Esophagus squamous epithelium (tissue), 5 donors: ENCODE measurements at regions of chr2 and their contacts with region 1.

Region 1: GRCh38 chr2:203650860-203651613 is 55.4 kb upstream of the CD28 start:
- DNase-seq: no peak
- H3K4me3 ChIP-seq: no peak overlapping the region
- H3K27ac ChIP-seq: peak overlapping the region in 2 of 4 donors; percentile 71 to 73
- H3K4me1 ChIP-seq: peaks cover 15 to 47% (median 27%) of the 10 kb centered on the region in 3 donors
- H3K27me3 ChIP-seq: no peaks in the 10 kb centered on the region
- CTCF ChIP-seq: peak; percentile 5 to 71 (median 54)
- POLR2A ChIP-seq: no peak

Region 2: GRCh38 chr2:203535078-203535783 is 115.8 kb before region 1 on chr2 and contains the start of gene RAPH1:
- intact Hi-C with region 1: loop called (anchors 10 kb)
- DNase-seq: no peak
- H3K4me3 ChIP-seq: peak within 1 kb of the TSS; percentile 79 to 98 (median 94)
- H3K27ac ChIP-seq: peak within 1 kb of the TSS; percentile 90 to 100 (median 95)
- H3K4me1 ChIP-seq: peaks cover 4 to 44% (median 11%) of the 10 kb centered on the region in 3 donors
- H3K27me3 ChIP-seq: no peaks in the 10 kb centered on the region
- CTCF ChIP-seq: peak in 1 of 6 experiments; percentile 10
- POLR2A ChIP-seq: peak in 3 of 4 donors; percentile 41 to 74 (median 71)
- total RNA-seq, gene RAPH1: 10.6 to 105 (median 26.0) TPM

Region 3: DNA sequence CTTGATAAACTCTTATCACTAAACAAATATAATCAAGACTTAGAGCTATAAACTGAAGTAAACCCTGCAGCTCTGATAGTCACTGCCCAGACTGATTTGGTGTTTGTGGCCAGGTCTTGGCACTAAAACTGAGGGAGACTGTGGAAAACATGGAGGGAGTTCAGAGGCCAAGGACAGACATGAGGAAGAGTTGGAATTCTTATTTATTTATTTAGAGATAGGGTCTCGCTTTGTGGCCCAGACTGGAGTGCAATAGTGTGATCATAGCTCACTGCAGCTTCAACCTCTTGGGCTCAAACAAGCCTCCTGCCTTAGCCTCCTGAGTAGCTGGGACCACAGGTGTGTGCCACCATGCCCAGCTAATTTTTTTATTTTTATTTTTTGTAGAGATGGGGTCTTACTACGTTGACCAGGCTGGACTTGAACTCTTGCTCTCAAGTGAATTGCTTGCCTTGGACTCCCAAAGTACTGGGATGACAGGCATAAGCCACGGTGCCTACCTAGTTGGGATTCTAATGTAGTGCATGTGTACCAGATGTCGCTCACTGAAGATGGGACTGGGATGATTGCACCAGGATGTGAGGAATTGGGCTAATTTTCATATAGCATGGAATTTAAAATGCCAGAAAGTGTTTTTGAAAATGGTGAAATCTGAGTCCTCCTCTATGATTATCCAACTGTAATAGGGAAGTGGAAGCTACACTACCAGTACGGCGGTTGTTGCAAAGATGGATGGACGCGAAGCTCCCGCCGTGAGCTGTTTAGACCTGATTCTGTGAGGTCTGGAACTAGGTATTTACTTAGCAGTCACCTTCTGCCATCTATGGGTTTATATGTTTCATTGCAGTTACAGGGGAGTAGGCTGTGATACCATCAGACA is 163.9 kb after region 1 on chr2:
- intact Hi-C with region 1: loop called (anchors 10 kb)
- DNase-seq: no peak
- H3K4me3 ChIP-seq: peak overlapping the region in 1 of 4 donors; percentile 21
- H3K27ac ChIP-seq: no peak overlapping the region
- H3K4me1 ChIP-seq: peaks cover 0 to 46% (median 2%) of the 10 kb centered on the region in 3 donors
- H3K27me3 ChIP-seq: peaks cover 0 to 12% (median 0%) of the 10 kb centered on the region in 4 donors
- CTCF ChIP-seq: peak in 5 of 6 experiments; percentile 70 to 88 (median 74)
- POLR2A ChIP-seq: no peak